A673 (cell line): ENCODE measurements at regions of chr20 and their contacts with region 1.

Region 1: GRCh38 chr20:61271312-61272221 is 19.5 kb downstream of the CDH4 start:
- DNase-seq: peak; percentile 80
- H3K4me3 ChIP-seq: no peak overlapping the region
- H3K27ac ChIP-seq: no peak overlapping the region
- H3K4me1 ChIP-seq: peaks cover 8% of the 10 kb centered on the region
- H3K27me3 ChIP-seq: peaks cover 12% of the 10 kb centered on the region
- CTCF ChIP-seq: no peak

Region 2: DNA sequence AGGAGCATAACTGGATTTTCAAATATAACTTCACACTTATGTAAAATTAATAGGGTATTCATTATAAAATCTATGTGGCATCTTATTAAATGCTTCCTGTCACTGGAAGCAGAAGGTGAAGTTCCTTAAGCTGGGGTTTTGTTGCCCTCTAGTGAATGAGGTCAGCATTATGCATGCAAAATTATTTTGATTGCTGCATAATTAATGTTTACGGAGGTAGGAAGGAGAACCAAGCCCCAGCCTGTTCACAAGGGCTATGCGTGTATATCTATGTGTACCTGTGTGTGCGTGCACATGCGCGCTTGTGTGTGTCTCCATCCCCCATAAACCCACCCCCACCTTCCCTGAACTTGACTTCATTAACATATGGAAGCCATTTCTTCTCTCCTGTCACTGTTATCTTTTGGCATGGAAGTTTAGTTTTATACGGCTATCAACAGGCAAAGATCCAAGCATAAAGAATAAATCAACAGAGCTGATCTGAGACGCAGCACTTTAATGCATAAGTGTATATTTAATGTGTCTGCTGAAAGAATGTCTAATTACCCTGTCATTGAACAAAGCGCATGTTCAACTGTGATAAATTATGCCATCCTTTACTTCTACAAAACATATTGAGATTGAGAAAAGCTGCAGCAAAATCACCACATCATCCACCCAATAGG is 109.7 kb before region 1 on chr20:
- CTCF ChIA-PET with region 1: no interaction called
- POLR2A ChIA-PET with region 1: no interaction called
- intact Hi-C with region 1: no loop called
- DNase-seq: peak; percentile 59
- H3K4me3 ChIP-seq: peak overlapping the region; percentile 30
- H3K27ac ChIP-seq: no peak overlapping the region
- H3K4me1 ChIP-seq: peaks cover 8% of the 10 kb centered on the region
- H3K27me3 ChIP-seq: no peaks in the 10 kb centered on the region
- CTCF ChIP-seq: peak; percentile 38

Region 3: DNA sequence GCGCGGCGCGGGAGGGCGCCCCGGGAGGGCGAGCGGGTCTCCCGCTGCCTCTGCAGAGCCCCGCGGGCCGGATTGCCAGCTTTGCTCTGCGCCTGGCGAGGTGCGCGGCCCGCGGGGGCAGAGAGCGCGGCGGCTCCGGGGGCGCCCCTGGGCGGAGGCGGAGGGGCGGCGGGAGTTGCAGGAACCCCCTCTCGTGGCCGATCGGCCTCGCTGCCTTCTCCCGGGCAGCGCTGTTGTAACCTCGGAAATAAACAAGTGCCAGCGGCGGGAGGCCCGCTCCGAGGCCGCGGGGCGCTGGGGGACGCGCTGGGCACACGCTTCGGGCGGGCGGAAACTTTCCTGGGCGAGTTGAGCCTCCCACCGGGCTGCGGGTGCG is 18.3 kb before region 1 on chr20:
- CTCF ChIA-PET with region 1: no interaction called
- POLR2A ChIA-PET with region 1: no interaction called
- intact Hi-C with region 1: loop called (anchors 1 kb)
- DNase-seq: peak; percentile 60
- H3K4me3 ChIP-seq: peak overlapping the region; percentile 62
- H3K27ac ChIP-seq: peak overlapping the region; percentile 57
- H3K4me1 ChIP-seq: peaks cover 17% of the 10 kb centered on the region
- H3K27me3 ChIP-seq: peaks cover 38% of the 10 kb centered on the region
- CTCF ChIP-seq: peak; percentile 30; the same call in 1 of the 2 replicates

Region 4: GRCh38 chr20:61414455-61414991 is 143.0 kb after region 1 on chr20:
- CTCF ChIA-PET with region 1: no interaction called
- POLR2A ChIA-PET with region 1: no interaction called
- intact Hi-C with region 1: no loop called
- DNase-seq: peak; percentile 58
- H3K4me3 ChIP-seq: no peak overlapping the region
- H3K27ac ChIP-seq: no peak overlapping the region
- H3K4me1 ChIP-seq: peaks cover 8% of the 10 kb centered on the region
- H3K27me3 ChIP-seq: peaks cover 3% of the 10 kb centered on the region
- CTCF ChIP-seq: no peak